ENCODE measurements at regions of chr19 and their contacts with region 1.

Region 1: DNA sequence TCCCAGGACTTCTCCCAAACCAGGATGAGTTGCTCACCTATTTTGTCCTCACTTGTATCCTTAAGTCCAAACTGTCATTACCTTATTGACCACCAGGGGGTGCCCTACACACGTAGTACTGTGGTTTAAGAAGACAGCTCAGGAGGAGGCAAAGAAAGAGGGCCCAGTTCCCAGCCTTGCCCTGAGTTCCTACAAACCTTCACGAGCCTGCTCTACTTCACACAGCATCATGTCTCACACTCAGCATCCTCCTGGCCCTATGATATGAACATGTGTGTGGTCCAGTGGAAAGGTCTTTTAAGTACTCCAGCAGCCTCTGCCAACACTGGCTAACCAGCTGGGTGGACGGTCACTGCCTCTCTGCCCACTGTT is 8.1 kb upstream of the ZNF784 start:
- DNase-seq: peak; percentile 66
- CTCF ChIP-seq: peak; percentile 88

Region 2: GRCh38 chr19:55467236-55468053 is 165.0 kb before region 1 on chr19:
- CTCF ChIA-PET with region 1: interaction called, 25 read pairs
- POLR2A ChIA-PET with region 1: no interaction called
- DNase-seq: peak; percentile 85
- CTCF ChIP-seq: peak; percentile 97

Region 3: GRCh38 chr19:55516878-55517620 is 115.4 kb before region 1 on chr19:
- CTCF ChIA-PET with region 1: interaction called, 109 read pairs
- POLR2A ChIA-PET with region 1: no interaction called
- DNase-seq: peak; percentile 100
- CTCF ChIP-seq: peak; percentile 98

Region 4: DNA sequence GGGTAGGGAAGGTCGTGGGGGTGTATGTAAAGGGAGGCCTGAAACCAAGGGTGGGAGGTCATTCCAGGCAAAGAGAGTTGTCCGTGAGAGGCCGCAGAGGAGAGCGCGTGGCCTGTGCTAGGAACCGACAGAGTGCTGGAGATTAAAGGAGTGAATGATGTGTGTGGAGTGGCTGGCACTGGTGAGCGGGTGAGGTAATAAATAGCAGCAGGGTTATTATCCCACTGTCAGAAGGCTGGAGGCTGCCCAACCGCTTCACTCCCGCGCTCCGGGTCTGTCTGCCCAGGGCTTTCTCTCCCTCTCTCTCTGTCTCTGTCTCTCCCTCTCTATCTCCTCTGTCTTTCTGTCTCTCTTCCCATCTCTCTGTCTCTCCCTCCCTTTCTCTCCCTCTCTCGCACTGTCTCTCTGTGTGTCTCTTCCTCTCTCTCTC is 69.2 kb before region 1 on chr19:
- CTCF ChIA-PET with region 1: no interaction called
- POLR2A ChIA-PET with region 1: no interaction called
- DNase-seq: no peak
- CTCF ChIP-seq: no peak

Region 5: GRCh38 chr19:55611983-55612645 is 20.3 kb before region 1 on chr19:
- CTCF ChIA-PET with region 1: interaction called, 37 read pairs
- POLR2A ChIA-PET with region 1: no interaction called
- DNase-seq: no peak
- CTCF ChIP-seq: no peak

Region 6: GRCh38 chr19:55653758-55654539 is 21.5 kb after region 1 on chr19:
- CTCF ChIA-PET with region 1: interaction called, 84 read pairs
- POLR2A ChIA-PET with region 1: interaction called, 7 read pairs
- DNase-seq: peak; percentile 92
- CTCF ChIP-seq: peak; percentile 100

Region 7: DNA sequence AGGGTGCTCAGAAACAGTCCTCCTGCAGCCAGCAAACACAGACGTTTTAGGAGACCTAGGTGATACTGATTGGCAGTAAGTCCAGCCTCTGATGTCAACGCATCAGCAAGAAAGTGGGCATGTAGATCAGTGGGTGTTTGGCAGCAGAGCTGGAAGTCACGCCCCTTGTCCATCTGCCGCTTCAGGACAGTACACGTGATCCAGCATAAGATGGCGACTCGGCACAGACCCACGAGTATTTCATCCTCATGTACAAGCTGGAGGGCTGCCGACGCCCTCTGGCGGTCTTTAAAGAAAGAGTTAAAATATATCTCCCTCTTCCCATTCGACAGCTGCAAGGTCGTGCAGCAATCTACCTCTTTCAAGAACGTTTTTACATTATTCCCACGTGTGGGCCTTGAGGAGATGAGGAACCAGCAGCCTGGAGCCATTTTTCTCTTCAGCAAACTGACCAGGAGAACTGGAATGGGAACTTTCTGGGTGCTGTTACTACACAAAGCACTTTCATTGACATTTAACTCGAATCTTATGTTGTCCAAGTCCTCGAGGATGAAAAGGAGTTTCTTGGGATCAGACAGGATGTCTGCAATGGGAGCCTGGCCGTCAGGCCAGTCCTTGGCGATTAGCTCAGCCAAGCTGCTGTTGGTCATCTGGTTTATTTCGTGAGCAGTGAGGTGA is 177.1 kb after region 1 on chr19:
- CTCF ChIA-PET with region 1: interaction called, 21 read pairs
- POLR2A ChIA-PET with region 1: no interaction called
- DNase-seq: peak; percentile 45
- CTCF ChIP-seq: peak; percentile 20

Region 8: DNA sequence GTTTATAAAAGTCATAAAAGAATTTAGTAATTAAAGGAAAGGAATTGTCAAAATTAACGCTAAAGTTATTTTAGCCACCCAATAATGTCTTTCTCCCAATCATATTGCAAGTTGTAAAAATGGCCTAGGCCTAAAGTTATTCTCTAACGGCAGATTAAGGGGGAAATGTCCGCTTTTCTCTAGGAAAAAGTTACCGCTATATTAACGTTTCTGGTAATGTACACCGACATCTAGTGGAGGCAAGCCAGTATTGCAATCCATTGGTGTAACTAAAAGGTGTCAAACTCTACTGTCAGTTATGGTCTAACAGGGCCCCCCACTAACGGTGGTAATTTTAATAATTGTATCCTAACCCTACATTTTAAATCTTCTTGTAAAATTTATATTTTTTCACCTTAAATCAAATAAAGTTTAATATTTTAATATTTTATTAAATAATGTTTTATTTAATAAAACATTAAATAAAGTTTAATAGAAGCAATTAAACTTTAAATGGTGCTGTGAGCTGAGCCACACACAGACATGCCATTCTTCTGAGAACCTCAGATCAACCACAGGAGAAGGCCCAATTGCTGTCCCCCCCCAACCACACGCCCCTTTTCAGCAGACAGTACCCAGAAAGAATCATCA is 718.1 kb after region 1 on chr19:
- CTCF ChIA-PET with region 1: interaction called, 10 read pairs
- POLR2A ChIA-PET with region 1: no interaction called
- DNase-seq: peak; percentile 37
- CTCF ChIP-seq: peak; percentile 82

Region 9: GRCh38 chr19:57171551-57172081 is 1539.2 kb after region 1 on chr19:
- CTCF ChIA-PET with region 1: no interaction called
- POLR2A ChIA-PET with region 1: no interaction called
- DNase-seq: peak; percentile 65
- CTCF ChIP-seq: no peak